Endothelial cell of umbilical vein (primary cell): ENCODE measurements at regions of chr1 and their contacts with region 1.

Region 1: GRCh38 chr1:117674521-117675397 is 68.9 kb downstream of the TENT5C start:
- DNase-seq: no peak
- H3K4me3 ChIP-seq: no peak overlapping the region
- H3K27ac ChIP-seq: no peak overlapping the region
- H3K4me1 ChIP-seq: peaks cover 14% of the 10 kb centered on the region
- H3K27me3 ChIP-seq: no peaks in the 10 kb centered on the region
- CTCF ChIP-seq: no peak
- POLR2A ChIP-seq: no peak

Region 2: DNA sequence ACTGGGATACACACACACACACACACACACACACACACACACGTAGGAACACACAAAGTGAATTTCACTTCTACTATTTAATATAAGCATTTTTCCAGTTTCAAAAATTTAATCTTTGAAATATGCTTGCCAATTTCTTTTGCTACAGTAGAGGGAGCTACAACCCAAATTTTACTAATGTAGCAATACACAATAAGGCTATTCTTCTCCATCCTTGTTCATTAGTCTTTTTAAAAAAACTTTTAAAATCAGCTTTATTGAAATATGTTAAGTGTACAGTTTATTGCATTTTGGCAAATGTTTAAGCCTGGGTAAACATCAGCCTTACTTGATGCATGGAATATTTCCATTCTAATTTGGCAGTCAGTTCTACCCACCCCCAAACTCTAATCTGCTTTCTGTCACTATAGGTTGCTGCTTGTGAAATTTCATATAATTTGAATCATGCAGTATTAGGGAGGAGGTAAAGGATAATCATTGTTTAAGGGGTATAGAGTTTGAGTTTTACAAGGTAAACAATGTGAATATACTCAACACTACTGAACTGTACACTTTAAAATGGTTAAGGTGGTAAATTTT is 161.9 kb before region 1 on chr1:
- CTCF ChIA-PET with region 1: interaction called, 3 read pairs
- POLR2A ChIA-PET with region 1: no interaction called
- dilution Hi-C with region 1: no loop called
- intact Hi-C with region 1: loop called (anchors 5 kb)
- DNase-seq: peak; percentile 41
- H3K4me3 ChIP-seq: no peak overlapping the region
- H3K27ac ChIP-seq: no peak overlapping the region
- H3K4me1 ChIP-seq: no peaks in the 10 kb centered on the region
- H3K27me3 ChIP-seq: no peaks in the 10 kb centered on the region
- CTCF ChIP-seq: peak; percentile 20 to 32
- POLR2A ChIP-seq: no peak

Region 3: GRCh38 chr1:117534995-117535467 is 139.7 kb before region 1 on chr1:
- CTCF ChIA-PET with region 1: interaction called, 37 read pairs
- POLR2A ChIA-PET with region 1: no interaction called
- dilution Hi-C with region 1: no loop called
- intact Hi-C with region 1: loop called (anchors 1 kb)
- DNase-seq: peak; percentile 47
- H3K4me3 ChIP-seq: no peak overlapping the region
- H3K27ac ChIP-seq: no peak overlapping the region
- H3K4me1 ChIP-seq: no peaks in the 10 kb centered on the region
- H3K27me3 ChIP-seq: peaks cover 0 to 2% of the 10 kb centered on the region in 2 experiments
- CTCF ChIP-seq: peak; percentile 50 to 74
- POLR2A ChIP-seq: no peak

Region 4: GRCh38 chr1:117555806-117556205 is 119.0 kb before region 1 on chr1:
- CTCF ChIA-PET with region 1: no interaction called
- POLR2A ChIA-PET with region 1: no interaction called
- dilution Hi-C with region 1: no loop called
- intact Hi-C with region 1: no loop called
- DNase-seq: no peak
- H3K4me3 ChIP-seq: no peak overlapping the region
- H3K27ac ChIP-seq: no peak overlapping the region
- H3K4me1 ChIP-seq: no peaks in the 10 kb centered on the region
- H3K27me3 ChIP-seq: peaks cover 0 to 4% of the 10 kb centered on the region in 2 experiments
- CTCF ChIP-seq: no peak
- POLR2A ChIP-seq: no peak

Region 5: DNA sequence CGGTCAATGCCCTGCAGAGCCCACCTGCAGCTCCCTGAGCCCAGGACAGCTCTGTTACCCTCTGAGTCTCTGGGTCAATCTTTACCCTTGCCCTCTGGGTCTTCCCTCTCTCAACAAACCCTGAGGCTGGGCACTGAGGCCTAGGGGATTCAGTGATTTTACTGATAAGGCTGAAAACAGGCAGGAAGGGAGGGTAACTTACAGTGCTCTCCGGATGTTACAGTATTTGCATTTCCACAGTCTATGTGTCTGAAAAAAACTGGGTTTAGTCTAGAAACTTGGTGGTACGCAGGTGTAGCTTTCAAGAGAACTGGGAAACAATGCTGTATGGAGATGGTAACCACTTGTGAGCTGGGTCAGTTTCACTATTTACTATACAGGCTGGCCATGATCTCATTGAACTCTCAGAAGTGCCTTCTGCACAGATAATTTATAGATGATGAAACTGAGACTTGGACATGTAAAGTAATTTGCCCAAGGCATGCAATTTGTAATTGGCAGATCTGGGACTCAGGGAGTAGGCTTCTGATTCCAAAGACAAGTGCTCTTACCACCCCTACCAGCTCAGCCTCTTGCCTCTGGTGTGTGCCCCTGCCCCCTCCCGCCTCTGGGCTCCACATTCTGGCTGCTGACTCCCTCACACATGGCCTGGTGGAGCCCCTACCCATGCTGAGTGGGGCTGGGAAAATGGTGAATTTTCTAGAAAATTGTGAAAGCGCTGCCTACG is 20.1 kb before region 1 on chr1:
- CTCF ChIA-PET with region 1: interaction called, 6 read pairs
- POLR2A ChIA-PET with region 1: no interaction called
- dilution Hi-C with region 1: no loop called
- intact Hi-C with region 1: loop called (anchors 2 kb)
- DNase-seq: no peak
- H3K4me3 ChIP-seq: no peak overlapping the region
- H3K27ac ChIP-seq: no peak overlapping the region
- H3K4me1 ChIP-seq: peaks cover 14% of the 10 kb centered on the region
- H3K27me3 ChIP-seq: no peaks in the 10 kb centered on the region
- CTCF ChIP-seq: no peak
- POLR2A ChIP-seq: no peak

Region 6: DNA sequence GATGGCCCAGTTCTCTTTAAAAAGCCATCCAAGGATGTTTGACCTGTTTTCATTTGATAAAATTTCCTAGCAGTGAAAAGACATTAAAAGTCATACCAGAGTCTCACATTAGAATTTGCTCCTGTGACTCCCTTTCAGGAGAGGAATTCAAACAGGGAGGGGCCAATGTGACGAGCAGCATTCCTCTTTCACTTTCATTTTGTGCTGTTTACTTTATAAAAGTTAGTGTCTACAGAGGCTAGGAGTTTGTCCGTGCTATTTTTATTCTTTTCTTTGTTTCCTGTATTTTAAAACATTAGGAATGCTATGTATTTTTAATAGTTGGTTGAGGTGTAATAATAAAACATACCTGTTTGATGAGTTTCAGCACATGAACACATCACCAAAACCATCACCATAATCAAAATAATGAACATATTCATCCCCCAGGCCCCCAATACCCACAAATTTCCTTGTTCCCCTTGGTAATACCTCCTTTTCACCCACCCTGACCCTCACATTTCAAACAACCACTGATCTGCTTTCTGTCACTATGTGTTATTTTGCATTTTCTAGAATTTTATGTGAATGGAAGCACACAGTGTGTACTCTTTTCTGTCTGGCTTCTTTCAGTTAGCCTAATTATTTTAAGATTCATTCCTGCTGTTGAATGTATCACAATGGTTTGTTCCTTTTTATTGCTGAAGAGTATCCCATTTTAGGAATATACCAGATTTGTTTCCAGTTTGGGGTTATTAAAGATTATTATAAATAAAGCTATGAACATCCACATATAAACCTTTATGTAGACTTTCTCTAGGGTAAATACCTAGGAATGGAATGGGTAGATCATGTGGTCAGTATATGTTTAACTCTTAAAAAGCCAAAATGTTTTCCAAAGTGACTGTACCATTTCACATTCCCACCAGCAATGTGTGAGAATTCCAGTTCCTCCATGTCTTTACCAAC is 60.6 kb after region 1 on chr1:
- CTCF ChIA-PET with region 1: no interaction called
- POLR2A ChIA-PET with region 1: no interaction called
- dilution Hi-C with region 1: no loop called
- intact Hi-C with region 1: loop called (anchors 5 kb)
- DNase-seq: peak; percentile 65
- H3K4me3 ChIP-seq: peak overlapping the region in 2 of 3 experiments; percentile 10 to 71
- H3K27ac ChIP-seq: no peak overlapping the region
- H3K4me1 ChIP-seq: peaks cover 3% of the 10 kb centered on the region
- H3K27me3 ChIP-seq: no peaks in the 10 kb centered on the region
- CTCF ChIP-seq: no peak
- POLR2A ChIP-seq: no peak